Activated CD8-positive, alpha-beta T cell treated with anti-CD3 and anti-CD28 coated beads for 36 hours (primary cell): ENCODE measurements at regions of chr1 and their contacts with region 1.

Region 1: DNA sequence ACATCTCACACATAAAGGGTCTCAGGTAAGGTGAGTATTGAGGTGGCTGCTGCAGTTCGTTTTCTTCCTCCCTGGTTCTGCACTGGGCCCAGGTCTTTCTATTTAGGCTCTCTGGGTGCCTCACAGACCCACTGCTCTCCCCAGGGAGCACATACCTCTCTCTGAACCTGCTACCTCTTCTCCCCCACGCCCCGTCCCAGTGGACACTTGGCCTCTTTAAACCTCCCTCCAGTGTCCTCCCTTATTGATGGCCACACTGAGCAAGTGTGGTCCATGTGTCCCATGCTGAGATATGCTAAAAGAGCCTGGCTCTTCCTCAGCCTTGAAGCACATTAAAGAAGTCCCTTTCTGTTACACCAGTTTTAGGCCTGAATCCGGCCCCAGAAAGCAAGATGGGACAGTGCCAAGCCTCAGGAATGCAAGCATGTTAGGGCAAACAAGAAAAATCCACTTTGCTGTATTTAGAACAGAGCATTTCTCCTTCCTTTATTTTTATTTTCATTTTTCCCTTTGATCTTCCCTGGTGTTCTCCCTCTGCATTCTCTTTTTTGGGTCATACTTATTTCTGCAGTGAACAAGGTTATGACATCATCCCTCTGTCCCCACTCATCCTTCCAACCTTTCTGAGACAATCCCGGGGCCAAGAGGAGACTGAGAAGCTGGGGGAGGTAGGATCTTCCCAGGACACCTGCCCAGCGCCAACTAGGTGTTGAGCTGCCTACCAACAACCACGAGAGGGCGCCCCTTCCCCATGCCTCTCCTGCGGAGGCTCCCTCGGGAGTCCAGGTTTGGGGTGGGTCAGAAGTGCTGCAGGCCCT is 5.0 kb upstream of the CHI3L2 start:
- DNase-seq: peak; percentile 86
- ATAC-seq: peak; percentile 12
- H3K4me3 Mint-ChIP-seq: peak overlapping the region; percentile 64
- H3K27ac Mint-ChIP-seq: peak overlapping the region; percentile 93
- H3K4me1 Mint-ChIP-seq: peaks cover 89% of the 10 kb centered on the region
- H3K27me3 Mint-ChIP-seq: no peaks in the 10 kb centered on the region
- CTCF ChIP-seq: peak; percentile 95

Region 2: GRCh38 chr1:110879758-110880606 is 342.5 kb before region 1 on chr1:
- CTCF ChIA-PET with region 1: no interaction called
- POLR2A ChIA-PET with region 1: interaction called, 5 read pairs
- intact Hi-C with region 1: loop called (anchors 5 kb)
- DNase-seq: peak; percentile 86
- ATAC-seq: peak; percentile 65
- H3K4me3 Mint-ChIP-seq: peak overlapping the region; percentile 91
- H3K27ac Mint-ChIP-seq: peak overlapping the region; percentile 99
- H3K4me1 Mint-ChIP-seq: peaks cover 50% of the 10 kb centered on the region
- H3K27me3 Mint-ChIP-seq: no peaks in the 10 kb centered on the region
- CTCF ChIP-seq: no peak

Region 3: GRCh38 chr1:111234866-111235265 is 12.3 kb after region 1 on chr1:
- CTCF ChIA-PET with region 1: interaction called, 10 read pairs
- POLR2A ChIA-PET with region 1: interaction called, 4 read pairs
- intact Hi-C with region 1: no loop called
- DNase-seq: no peak
- ATAC-seq: peak; percentile 51
- H3K4me3 Mint-ChIP-seq: no peak overlapping the region
- H3K27ac Mint-ChIP-seq: no peak overlapping the region
- H3K4me1 Mint-ChIP-seq: peaks cover 22% of the 10 kb centered on the region
- H3K27me3 Mint-ChIP-seq: no peaks in the 10 kb centered on the region
- CTCF ChIP-seq: no peak

Region 4: DNA sequence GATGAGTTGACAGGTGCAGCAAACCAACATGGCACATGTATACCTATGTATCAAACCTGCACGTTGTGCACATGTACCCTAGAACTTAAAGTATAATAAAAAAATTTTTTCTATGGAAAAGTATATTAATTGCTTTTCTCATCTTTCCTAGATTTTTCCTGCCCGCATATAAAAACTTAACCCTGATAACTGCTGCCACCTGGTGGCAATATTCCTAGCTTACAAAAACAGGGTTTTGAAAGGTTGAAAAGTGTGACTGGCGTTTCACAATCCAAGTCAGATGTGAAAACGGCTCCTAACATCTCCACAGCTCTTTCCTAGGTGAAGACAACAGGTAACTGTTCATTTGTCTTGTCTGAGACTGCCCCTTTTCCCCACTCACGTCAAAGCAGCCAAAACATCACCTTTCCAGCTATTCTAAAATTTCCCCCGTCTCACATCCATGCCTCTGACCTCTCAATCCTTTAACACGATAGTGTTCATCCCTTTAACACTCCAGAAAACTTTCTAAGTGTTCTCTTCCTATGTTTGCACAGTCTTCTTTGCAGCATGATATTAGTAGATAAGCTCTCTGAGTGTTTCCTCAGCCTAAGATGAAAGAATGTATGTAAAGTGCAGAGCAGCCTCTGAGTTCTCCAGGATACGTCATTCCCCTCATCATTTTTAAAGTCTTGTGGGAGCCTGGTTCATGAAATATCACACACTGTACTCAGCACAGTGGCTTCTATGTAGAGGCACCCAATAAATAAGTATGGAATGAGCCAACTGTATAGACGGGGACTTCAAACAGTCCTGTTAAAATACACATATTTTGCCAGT is 177.5 kb after region 1 on chr1:
- CTCF ChIA-PET with region 1: interaction called, 109 read pairs
- POLR2A ChIA-PET with region 1: interaction called, 5 read pairs
- intact Hi-C with region 1: loop called (anchors 2 kb)
- DNase-seq: peak; percentile 60
- ATAC-seq: no peak
- H3K4me3 Mint-ChIP-seq: no peak overlapping the region
- H3K27ac Mint-ChIP-seq: no peak overlapping the region
- H3K4me1 Mint-ChIP-seq: peaks cover 18% of the 10 kb centered on the region
- H3K27me3 Mint-ChIP-seq: no peaks in the 10 kb centered on the region
- CTCF ChIP-seq: peak; percentile 83

Region 5: DNA sequence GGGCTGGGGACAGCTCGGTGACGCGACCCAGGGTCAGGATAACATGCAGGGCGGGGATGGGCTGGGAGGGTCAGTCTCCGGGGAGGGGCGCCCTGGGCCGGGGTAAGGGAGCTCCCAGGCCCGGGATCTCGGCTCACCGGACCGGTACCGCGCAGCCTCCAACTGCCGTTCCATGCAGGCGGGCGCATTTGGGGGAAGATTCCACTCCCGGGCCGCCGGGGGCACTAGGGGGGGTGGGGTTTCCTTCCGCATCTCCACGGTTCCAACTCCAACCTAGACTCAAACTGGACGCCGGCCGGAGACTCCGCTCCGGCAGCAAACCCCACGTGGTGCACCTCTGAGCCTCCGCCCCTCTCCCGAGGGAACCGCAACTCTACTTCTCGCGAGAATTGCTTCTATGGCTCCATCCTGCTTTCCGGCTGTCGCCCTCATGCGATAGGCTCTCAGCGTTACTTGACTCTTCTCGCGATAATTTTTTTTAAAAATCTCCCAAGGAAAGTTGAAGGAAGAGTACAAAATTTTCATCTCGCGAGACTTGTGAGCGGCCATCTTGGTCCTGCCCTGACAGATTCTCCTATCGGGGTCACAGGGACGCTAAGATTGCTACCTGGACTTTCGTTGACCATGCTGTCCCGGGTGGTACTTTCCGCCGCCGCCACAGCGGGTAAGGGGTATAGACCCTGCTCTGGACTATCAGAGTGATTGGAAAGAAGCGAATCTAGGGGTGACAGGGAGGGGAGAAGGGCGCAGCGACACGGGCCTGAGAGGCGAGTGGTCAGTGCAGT is 226.6 kb after region 1 on chr1 and contains the starts of genes ATP5PB and WDR77:
- CTCF ChIA-PET with region 1: interaction called, 3 read pairs
- POLR2A ChIA-PET with region 1: interaction called, 10 read pairs
- intact Hi-C with region 1: loop called (anchors 5 kb)
- DNase-seq: peak; percentile 95
- ATAC-seq: peak; percentile 96
- H3K4me3 Mint-ChIP-seq: peak within 1 kb of the TSS; percentile 100
- H3K27ac Mint-ChIP-seq: peak within 1 kb of the TSS; percentile 100
- H3K4me1 Mint-ChIP-seq: peaks cover 73% of the 10 kb centered on the region
- H3K27me3 Mint-ChIP-seq: no peaks in the 10 kb centered on the region
- CTCF ChIP-seq: no peak
- total RNA-seq, gene ATP5PB: 341 to 342 TPM
- total RNA-seq, gene WDR77: 54.0 to 54.6 TPM